Activated CD4-positive, alpha-beta T cell treated with anti-CD3 and anti-CD28 coated beads, Interleukin-2, amount 10 ng/mL, durations not matched to agents 24 days and 14 days (primary cell): ENCODE measurements at regions of chr1 and their contacts with region 1.

Region 1: GRCh38 chr1:31065310-31066217 is at the start of gene PUM1:
- DNase-seq: peak; percentile 99
- H3K4me3 Mint-ChIP-seq: peak within 1 kb of the TSS; percentile 95
- H3K27ac Mint-ChIP-seq: peak within 1 kb of the TSS; percentile 99
- H3K4me1 Mint-ChIP-seq: peaks cover 22% of the 10 kb centered on the region
- H3K27me3 Mint-ChIP-seq: no peaks in the 10 kb centered on the region
- total RNA-seq, gene PUM1: 122 and 132 TPM in 2 replicates

Region 2: DNA sequence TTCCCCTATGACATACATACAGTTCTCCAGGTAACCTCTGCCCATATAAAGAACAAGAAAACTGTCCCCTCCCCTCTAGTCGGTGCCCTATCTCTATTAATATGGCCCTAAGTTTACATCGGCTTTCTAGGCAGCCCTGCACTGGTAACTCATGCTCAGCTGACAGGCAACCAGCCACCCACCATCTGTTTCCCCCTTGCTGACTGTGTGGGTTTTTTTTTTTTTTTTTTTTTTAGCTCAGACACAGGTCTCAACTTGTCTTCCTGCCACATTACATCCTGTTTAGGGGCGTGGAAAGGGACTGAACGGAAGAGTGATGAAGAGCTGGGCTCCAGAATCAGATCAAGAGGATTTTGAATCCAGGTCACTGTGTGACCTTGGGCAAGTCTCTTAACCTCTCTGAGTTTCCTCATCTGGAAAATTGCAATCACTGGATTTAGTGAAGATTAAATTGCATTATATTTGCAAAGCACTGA is 321.9 kb before region 1 on chr1:
- intact Hi-C with region 1: loop called (anchors 10 kb)
- DNase-seq: peak; percentile 92
- H3K4me3 Mint-ChIP-seq: peak overlapping the region; percentile 89
- H3K27ac Mint-ChIP-seq: peak overlapping the region; percentile 99
- H3K4me1 Mint-ChIP-seq: peaks cover 91% of the 10 kb centered on the region
- H3K27me3 Mint-ChIP-seq: no peaks in the 10 kb centered on the region

Region 3: DNA sequence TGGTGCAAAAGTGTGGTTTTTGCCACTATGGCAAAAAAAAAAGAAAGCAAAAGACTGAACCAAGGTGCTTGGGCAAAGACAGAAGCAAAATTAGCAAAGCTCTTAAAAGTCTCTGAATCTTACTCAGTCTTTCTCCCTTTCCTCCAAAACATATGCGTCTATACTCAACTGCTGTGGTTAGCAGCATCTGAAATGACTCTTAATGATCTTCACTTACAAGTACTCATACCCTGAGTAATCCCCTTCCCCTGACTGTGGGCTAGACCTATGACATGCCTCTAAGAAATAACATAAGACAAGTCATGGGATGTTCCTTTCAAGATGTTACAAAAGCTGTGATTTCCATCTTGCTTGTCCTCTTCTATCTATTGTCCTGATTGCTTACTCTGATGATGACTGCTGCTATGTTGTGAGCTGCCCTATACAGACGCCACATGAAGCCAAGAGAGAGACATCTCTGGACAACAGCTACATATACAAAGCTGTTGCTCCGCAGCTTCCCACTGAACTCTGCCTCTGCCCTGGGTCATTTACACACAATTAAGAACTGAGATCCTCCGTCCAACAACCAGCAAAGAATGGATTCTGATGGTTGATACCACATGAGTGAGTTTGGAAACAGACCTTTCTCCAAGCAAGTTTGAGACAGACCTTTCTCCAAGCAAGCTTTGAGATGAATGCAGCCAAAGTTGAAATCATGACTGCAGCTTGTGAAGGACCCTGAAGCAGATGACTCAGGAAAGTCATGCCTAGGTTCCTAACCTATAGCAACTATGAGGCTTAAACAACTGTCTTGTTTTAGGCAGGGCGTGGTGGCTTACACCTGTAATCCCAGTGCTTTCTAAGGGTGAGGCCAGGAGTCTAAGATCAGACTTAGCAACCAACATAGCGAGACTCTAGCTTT is 55.2 kb before region 1 on chr1:
- intact Hi-C with region 1: loop called (anchors 1 kb)
- DNase-seq: peak; percentile 67
- H3K4me3 Mint-ChIP-seq: no peak overlapping the region
- H3K27ac Mint-ChIP-seq: peak overlapping the region; percentile 81
- H3K4me1 Mint-ChIP-seq: peaks cover 47% of the 10 kb centered on the region
- H3K27me3 Mint-ChIP-seq: no peaks in the 10 kb centered on the region

Region 4: GRCh38 chr1:31054349-31054748 is 11.2 kb before region 1 on chr1:
- intact Hi-C with region 1: loop called (anchors 1 kb)
- DNase-seq: no peak
- H3K4me3 Mint-ChIP-seq: peak overlapping the region; percentile 8
- H3K27ac Mint-ChIP-seq: peak overlapping the region; percentile 73
- H3K4me1 Mint-ChIP-seq: peaks cover 49% of the 10 kb centered on the region
- H3K27me3 Mint-ChIP-seq: no peaks in the 10 kb centered on the region

Region 5: DNA sequence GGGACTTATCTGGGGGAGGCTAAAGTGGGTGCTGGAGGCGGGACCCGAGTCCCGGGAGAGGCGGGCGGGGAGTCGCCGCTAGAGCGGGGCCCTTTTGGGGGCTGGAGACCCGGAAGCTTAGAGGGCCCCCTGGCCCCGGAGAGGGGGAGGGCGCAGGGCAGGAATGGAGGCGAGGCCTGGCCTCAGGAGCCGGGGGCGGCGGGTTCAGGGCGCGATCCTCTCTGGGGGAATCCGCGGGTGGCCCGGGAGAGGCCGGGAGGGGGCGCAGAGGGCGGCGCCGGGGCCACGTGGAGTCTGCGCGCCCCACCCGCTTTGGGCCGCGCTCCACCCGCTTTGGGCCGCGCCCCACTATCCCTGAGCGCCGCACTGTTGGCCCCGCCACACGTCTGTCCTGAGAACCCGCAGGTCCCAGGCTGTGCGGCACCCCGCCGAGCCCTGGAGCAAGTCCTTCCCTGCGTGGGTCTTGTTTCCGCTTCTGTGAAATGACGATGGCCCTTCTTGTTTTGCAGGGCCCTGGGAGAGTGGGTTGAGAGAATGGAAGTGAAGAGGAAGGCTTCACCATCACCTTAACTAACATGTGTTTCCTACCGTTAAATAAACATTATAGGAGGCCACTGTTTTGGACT is 89.8 kb after region 1 on chr1:
- intact Hi-C with region 1: loop called (anchors 2 kb)
- DNase-seq: peak; percentile 91
- H3K4me3 Mint-ChIP-seq: peak overlapping the region; percentile 96
- H3K27ac Mint-ChIP-seq: peak overlapping the region; percentile 84
- H3K4me1 Mint-ChIP-seq: peaks cover 6% of the 10 kb centered on the region
- H3K27me3 Mint-ChIP-seq: peaks cover 4% of the 10 kb centered on the region

Region 6: DNA sequence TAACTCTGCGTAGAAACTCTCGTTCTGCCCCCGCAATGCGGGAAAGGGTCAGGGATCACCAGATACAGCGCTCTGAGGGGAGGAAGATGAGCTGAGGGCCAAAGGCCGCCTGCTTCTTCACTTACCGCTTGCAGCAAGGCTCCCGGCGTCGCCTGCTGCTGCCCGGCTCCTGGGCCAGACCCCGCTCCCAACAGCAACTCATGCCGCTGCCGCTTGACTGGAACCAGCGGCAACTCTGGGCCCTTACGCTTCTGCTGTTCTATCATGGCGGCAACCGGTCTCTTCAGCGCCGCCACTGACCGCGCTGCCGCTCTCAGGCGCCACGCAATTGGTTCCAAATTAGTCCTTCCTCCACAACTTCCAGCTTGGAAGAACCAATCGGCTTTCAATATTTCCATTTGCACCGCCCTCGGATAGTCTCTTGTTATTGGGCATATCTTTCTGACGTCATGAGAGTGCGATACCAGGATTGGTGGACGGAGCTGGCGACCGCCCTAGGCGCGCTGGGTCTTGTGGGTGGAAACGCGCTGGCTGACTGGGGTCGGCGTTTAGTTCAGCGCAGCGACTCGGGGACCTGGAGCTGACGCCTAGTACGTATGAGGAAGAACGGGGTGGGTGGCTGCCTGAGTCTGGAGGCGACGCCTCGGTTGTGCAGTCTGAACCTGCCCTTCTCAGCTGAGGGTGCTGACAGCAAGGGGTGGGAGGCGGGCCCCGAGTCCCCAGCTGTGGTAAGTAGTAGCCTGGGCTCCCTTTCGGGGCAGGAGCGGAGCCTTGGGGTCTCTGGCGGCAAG is 231.1 kb after region 1 on chr1 and contains the starts of genes SNRNP40 and ZCCHC17:
- intact Hi-C with region 1: loop called (anchors 10 kb)
- DNase-seq: peak; percentile 98
- H3K4me3 Mint-ChIP-seq: no peak within 1 kb of the TSS
- H3K27ac Mint-ChIP-seq: no peak within 1 kb of the TSS
- H3K4me1 Mint-ChIP-seq: peaks cover 26% of the 10 kb centered on the region
- H3K27me3 Mint-ChIP-seq: no peaks in the 10 kb centered on the region
- total RNA-seq, gene SNRNP40: 132 and 133 TPM in 2 replicates
- total RNA-seq, gene ZCCHC17: 25.5 and 26.2 TPM in 2 replicates

Region 7: DNA sequence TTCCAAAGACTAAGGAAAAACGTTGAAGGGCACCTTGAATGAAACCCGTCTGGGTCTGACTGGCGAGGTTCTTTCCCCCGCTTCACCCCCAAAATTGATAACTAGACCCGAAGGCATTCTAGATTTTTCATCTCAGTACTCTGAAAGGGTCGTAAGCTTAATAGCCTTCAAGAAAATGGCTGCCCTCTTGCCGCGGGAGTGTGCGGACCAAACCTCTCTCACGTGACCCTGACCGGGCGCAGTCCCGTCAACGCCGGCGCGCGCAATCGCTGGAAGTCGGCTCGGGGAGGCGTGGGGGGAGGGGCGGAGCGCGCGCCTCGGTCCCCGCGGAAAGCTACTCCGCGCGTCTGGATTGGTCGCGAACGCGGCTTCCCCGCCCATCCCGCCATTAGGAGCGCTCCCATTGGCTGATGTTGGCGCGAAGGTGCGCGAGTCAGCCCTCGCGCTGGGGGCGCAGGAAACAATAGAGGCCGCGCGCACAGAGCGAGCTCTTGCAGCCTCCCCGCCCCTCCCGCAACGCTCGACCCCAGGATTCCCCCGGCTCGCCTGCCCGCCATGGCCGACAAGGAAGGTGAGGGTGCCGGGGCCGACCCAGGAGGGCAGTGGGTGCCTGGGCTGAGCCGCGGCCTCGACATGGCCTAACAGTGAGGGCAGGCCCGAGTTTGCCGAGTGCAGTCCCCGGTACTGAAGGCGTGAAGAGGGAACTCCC is 1585.3 kb after region 1 on chr1 and contains the start of gene RBBP4:
- intact Hi-C with region 1: loop called (anchors 10 kb)
- DNase-seq: peak; percentile 100
- H3K4me3 Mint-ChIP-seq: peak within 1 kb of the TSS; percentile 99
- H3K27ac Mint-ChIP-seq: peak within 1 kb of the TSS; percentile 100
- H3K4me1 Mint-ChIP-seq: peaks cover 37% of the 10 kb centered on the region
- H3K27me3 Mint-ChIP-seq: no peaks in the 10 kb centered on the region
- total RNA-seq, gene RBBP4: 329 and 331 TPM in 2 replicates